Calu3 (cell line): ENCODE measurements at regions of chr21 and their contacts with region 1.

Region 1: GRCh38 chr21:15483138-15483780 is 246.5 kb upstream of the USP25 start:
- DNase-seq: peak; percentile 83
- H3K4me3 Mint-ChIP-seq: no peak overlapping the region
- H3K27ac Mint-ChIP-seq: no peak overlapping the region
- H3K4me1 Mint-ChIP-seq: no peaks in the 10 kb centered on the region
- H3K27me3 Mint-ChIP-seq: no peaks in the 10 kb centered on the region
- CTCF ChIP-seq: peak; percentile 75

Region 2: GRCh38 chr21:15241997-15242736 is 241.1 kb before region 1 on chr21:
- CTCF ChIA-PET with region 1: no interaction called
- intact Hi-C with region 1: loop called (anchors 2 kb)
- DNase-seq: no peak
- H3K4me3 Mint-ChIP-seq: no peak overlapping the region
- H3K27ac Mint-ChIP-seq: no peak overlapping the region
- H3K4me1 Mint-ChIP-seq: peaks cover 20% of the 10 kb centered on the region
- H3K27me3 Mint-ChIP-seq: no peaks in the 10 kb centered on the region
- CTCF ChIP-seq: no peak

Region 3: DNA sequence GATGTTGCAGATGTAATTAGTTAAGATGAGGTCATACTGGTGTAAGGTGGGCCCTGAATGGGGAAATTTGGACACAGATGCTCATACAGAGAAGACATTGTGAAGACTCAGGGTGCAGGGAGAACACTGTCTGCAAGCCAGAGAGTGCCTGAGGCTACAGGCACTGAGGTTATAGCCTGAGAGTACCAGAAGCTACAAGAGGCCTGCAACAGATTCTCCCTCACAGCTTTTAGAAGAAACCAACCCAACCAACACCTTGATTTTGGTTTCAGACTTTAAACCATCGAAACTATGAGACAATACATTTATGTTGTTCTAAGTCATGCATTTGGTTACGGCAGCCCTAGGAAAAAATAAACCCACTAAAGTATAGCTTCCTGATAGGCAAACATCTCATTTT is 75.2 kb before region 1 on chr21:
- CTCF ChIA-PET with region 1: no interaction called
- intact Hi-C with region 1: no loop called
- DNase-seq: no peak
- H3K4me3 Mint-ChIP-seq: no peak overlapping the region
- H3K27ac Mint-ChIP-seq: no peak overlapping the region
- H3K4me1 Mint-ChIP-seq: peaks cover 15% of the 10 kb centered on the region
- H3K27me3 Mint-ChIP-seq: no peaks in the 10 kb centered on the region
- CTCF ChIP-seq: no peak